Spleen (tissue), 13 donors: ENCODE measurements at regions of chr7 and their contacts with region 1.

Region 1: GRCh38 chr7:152025077-152025936 is at the start of gene GALNT11:
- DNase-seq: peak; percentile 96
- H3K4me3 ChIP-seq: peak within 1 kb of the TSS; percentile 52 to 84 (median 59)
- H3K27ac ChIP-seq: peak within 1 kb of the TSS; percentile 75 to 92 (median 87)
- H3K4me1 ChIP-seq: peaks cover 7 to 45% (median 17%) of the 10 kb centered on the region in 6 donors
- H3K27me3 ChIP-seq: no peaks in the 10 kb centered on the region
- CTCF ChIP-seq: peak in 5 of 11 experiments; percentile 21 to 54 (median 32)
- POLR2A ChIP-seq: peak in 2 of 3 donors; percentile 15 to 37
- total RNA-seq, gene GALNT11: 23.0 to 46.0 (median 31.9) TPM

Region 2: GRCh38 chr7:151773756-151774155 is 251.6 kb before region 1 on chr7:
- intact Hi-C with region 1: loop called (anchors 10 kb)
- DNase-seq: peak; percentile 35
- H3K4me3 ChIP-seq: no peak overlapping the region
- H3K27ac ChIP-seq: no peak overlapping the region
- H3K4me1 ChIP-seq: peaks cover 0 to 17% (median 7%) of the 10 kb centered on the region in 6 donors
- H3K27me3 ChIP-seq: no peaks in the 10 kb centered on the region
- CTCF ChIP-seq: no peak
- POLR2A ChIP-seq: no peak